ENCODE measurements at regions of chr2 and their contacts with region 1.

Region 1: DNA sequence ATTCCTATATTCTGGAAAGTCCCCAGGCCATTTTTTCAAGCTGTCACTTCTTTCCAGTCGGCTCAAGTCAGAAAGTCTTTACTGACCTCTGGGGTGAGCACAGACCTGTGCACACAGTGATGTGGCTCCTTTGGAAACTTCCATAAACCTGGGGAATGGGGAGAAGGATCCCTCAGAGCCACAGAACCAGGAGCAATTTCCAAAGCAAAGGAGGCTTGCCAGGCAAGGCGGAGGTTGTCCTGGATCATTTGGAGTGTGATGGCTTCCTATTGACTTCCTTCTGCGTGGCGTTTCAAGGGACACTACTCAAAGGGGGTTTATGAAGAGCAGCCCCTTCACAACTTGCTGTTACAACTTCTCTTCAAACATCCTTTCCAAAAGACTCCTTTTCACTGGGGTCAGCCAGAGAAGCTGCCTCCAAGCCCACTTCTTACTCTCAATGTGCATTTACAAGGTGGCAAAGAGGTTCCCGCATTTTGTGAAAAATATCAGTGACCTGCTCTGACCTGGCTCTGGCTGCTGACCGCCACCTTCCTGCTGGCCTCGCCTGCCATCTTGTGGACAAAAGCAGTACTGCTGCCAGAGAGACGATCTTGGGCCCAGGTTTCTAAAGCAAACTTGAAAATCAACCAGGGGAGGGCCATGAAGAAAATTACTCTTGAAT is 18.2 kb upstream of the TMEM247 start:
- DNase-seq: peak; percentile 32
- H3K4me3 ChIP-seq: no peak overlapping the region
- H3K27ac ChIP-seq: no peak overlapping the region
- H3K4me1 ChIP-seq: no peaks in the 10 kb centered on the region
- H3K27me3 ChIP-seq: no peaks in the 10 kb centered on the region
- CTCF ChIP-seq: peak; percentile 97 to 100

Region 2: GRCh38 chr2:45643543-45644542 is 817.3 kb before region 1 on chr2:
- CTCF ChIA-PET with region 1: no interaction called
- dilution Hi-C with region 1: no loop called
- in situ Hi-C with region 1: no loop called
- intact Hi-C with region 1: loop called (anchors 2 kb)
- DNase-seq: peak; percentile 49
- H3K4me3 ChIP-seq: peak overlapping the region; percentile 48 to 65 (median 51)
- H3K27ac ChIP-seq: no peak overlapping the region
- H3K4me1 ChIP-seq: peaks cover 12% of the 10 kb centered on the region
- H3K27me3 ChIP-seq: peaks cover 2% of the 10 kb centered on the region
- CTCF ChIP-seq: peak; percentile 61 to 83

Region 3: DNA sequence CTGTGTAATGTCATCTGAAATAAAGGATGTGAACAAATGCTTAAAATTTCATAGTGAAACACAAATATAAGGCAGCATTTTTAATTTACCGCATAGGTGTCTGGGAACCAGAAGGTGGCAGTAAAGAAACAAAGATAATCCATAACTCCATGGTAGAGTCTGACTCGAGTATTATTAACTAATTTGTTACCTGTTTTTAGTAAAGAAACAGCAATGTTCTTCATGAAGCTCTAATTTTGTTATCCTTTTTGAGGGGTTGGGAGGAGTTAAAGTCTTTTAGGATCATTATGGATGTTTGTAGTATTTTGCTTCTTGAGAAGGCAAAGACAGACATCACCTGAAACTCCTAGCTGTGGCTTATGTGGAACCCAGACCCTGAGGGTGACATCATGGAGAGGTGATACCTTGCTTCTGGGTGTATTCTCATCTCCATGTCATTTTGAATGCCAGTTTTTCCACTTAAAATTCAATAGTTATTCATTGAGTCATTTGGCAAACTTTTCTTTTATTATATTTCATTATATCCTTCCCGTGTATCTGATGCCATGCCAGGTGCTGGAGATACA is 450.1 kb before region 1 on chr2:
- CTCF ChIA-PET with region 1: no interaction called
- dilution Hi-C with region 1: no loop called
- in situ Hi-C with region 1: no loop called
- intact Hi-C with region 1: loop called (anchors 1 kb)
- DNase-seq: peak; percentile 37
- H3K4me3 ChIP-seq: no peak overlapping the region
- H3K27ac ChIP-seq: no peak overlapping the region
- H3K4me1 ChIP-seq: peaks cover 36% of the 10 kb centered on the region
- H3K27me3 ChIP-seq: no peaks in the 10 kb centered on the region
- CTCF ChIP-seq: peak; percentile 62 to 69

Region 4: GRCh38 chr2:46082521-46083485 is 378.3 kb before region 1 on chr2:
- CTCF ChIA-PET with region 1: no interaction called
- dilution Hi-C with region 1: no loop called
- in situ Hi-C with region 1: no loop called
- intact Hi-C with region 1: loop called (anchors 1 kb)
- DNase-seq: no peak
- H3K4me3 ChIP-seq: no peak overlapping the region
- H3K27ac ChIP-seq: no peak overlapping the region
- H3K4me1 ChIP-seq: peaks cover 6% of the 10 kb centered on the region
- H3K27me3 ChIP-seq: no peaks in the 10 kb centered on the region
- CTCF ChIP-seq: no peak

Region 5: GRCh38 chr2:46394649-46395510 is 66.3 kb before region 1 on chr2:
- CTCF ChIA-PET with region 1: no interaction called
- dilution Hi-C with region 1: no loop called
- in situ Hi-C with region 1: no loop called
- intact Hi-C with region 1: no loop called
- DNase-seq: peak; percentile 50
- H3K4me3 ChIP-seq: no peak overlapping the region
- H3K27ac ChIP-seq: no peak overlapping the region
- H3K4me1 ChIP-seq: peaks cover 21% of the 10 kb centered on the region
- H3K27me3 ChIP-seq: no peaks in the 10 kb centered on the region
- CTCF ChIP-seq: no peak

Region 6: GRCh38 chr2:46535360-46535759 is 74.2 kb after region 1 on chr2:
- CTCF ChIA-PET with region 1: interaction called, 12 read pairs
- dilution Hi-C with region 1: no loop called
- in situ Hi-C with region 1: no loop called
- intact Hi-C with region 1: no loop called
- DNase-seq: no peak
- H3K4me3 ChIP-seq: no peak overlapping the region
- H3K27ac ChIP-seq: no peak overlapping the region
- H3K4me1 ChIP-seq: no peaks in the 10 kb centered on the region
- H3K27me3 ChIP-seq: no peaks in the 10 kb centered on the region
- CTCF ChIP-seq: no peak

Measured in mammary epithelial cell (primary cell).